ENCODE measurements at regions of chr7 and their contacts with region 1.

Region 1: DNA sequence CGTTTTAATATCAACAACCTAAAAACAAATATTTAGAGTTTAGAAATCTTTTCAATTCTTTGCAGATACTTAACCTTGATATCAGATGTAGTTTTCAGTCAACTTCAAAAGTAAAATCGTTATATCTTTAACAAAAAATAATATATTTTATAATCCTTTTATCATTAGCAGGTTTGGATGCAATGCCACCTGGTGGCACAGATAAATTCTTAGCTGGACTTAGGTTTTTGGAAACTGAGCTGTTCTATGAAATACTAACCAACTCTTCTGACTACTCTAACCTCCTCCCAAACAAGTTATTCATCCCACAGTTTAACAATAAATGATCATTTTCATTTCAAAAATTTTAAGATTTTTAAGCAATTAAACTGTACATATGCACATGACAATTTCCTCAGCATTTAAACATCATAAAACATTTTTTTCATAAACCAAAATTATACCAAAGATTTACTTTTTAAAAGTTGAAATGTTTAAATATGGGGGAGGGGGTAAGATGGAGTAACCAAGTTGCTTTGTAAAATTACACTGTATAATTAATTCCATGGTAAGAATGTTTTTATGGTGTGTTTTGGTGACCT is 56.9 kb downstream of the HIBADH start:
- DNase-seq: peak; percentile 23
- H3K4me3 ChIP-seq: no peak overlapping the region
- H3K27ac ChIP-seq: no peak overlapping the region
- H3K4me1 ChIP-seq: peaks cover 1% of the 10 kb centered on the region
- H3K27me3 ChIP-seq: no peaks in the 10 kb centered on the region
- CTCF ChIP-seq: peak; percentile 49 to 60

Region 2: GRCh38 chr7:27204851-27205337 is 400.9 kb before region 1 on chr7:
- CTCF ChIA-PET with region 1: interaction called, 24 read pairs
- dilution Hi-C with region 1: no loop called
- in situ Hi-C with region 1: no loop called
- intact Hi-C with region 1: no loop called
- DNase-seq: no peak
- H3K4me3 ChIP-seq: peak overlapping the region in 1 of 3 experiments; percentile 6
- H3K27ac ChIP-seq: no peak overlapping the region
- H3K4me1 ChIP-seq: peaks cover 18% of the 10 kb centered on the region
- H3K27me3 ChIP-seq: peaks cover 56% of the 10 kb centered on the region
- CTCF ChIP-seq: no peak

Region 3: GRCh38 chr7:27784393-27785053 is 178.7 kb after region 1 on chr7:
- CTCF ChIA-PET with region 1: no interaction called
- dilution Hi-C with region 1: no loop called
- in situ Hi-C with region 1: no loop called
- intact Hi-C with region 1: no loop called
- DNase-seq: peak; percentile 51
- H3K4me3 ChIP-seq: no peak overlapping the region
- H3K27ac ChIP-seq: no peak overlapping the region
- H3K4me1 ChIP-seq: peaks cover 6% of the 10 kb centered on the region
- H3K27me3 ChIP-seq: no peaks in the 10 kb centered on the region
- CTCF ChIP-seq: peak; percentile 46 to 58

Region 4: DNA sequence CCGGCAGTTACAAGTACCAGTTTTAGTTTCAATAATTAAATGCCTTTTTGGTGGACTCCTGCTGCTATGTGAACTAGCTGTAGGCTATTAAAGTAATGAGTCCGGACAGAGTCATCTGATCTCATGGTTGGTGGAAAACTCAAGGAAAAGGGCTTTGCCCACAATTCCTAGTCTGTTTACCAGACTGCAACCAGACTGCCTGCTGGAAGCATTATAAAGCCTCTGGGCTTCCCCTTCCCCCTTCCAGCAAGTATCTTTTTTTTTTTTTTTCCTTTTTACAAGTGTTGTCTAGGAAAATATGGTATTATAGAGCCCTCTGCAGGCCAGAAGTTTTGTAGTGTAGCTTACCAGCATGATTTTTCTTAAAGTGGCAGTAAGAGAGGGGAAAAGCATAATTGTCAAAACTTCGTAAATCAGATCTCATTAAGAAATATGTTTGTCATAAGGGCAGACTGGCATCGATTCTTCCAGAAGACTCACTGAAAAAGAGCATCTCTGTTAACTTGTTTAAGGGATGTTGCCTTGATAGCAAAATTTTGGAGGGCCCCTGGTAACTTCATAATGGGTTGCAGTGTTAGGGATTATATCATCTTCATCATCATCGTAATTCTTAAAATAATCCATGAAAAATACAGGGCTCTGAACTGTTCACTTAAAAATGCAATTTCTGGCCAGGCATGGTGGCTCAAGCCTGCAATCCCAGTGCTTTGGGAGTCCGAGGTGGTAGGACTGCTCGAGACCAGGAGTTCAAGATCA is 315.5 kb after region 1 on chr7:
- CTCF ChIA-PET with region 1: no interaction called
- dilution Hi-C with region 1: no loop called
- in situ Hi-C with region 1: no loop called
- intact Hi-C with region 1: loop called (anchors 10 kb)
- DNase-seq: peak; percentile 56
- H3K4me3 ChIP-seq: no peak overlapping the region
- H3K27ac ChIP-seq: no peak overlapping the region
- H3K4me1 ChIP-seq: peaks cover 23% of the 10 kb centered on the region
- H3K27me3 ChIP-seq: no peaks in the 10 kb centered on the region
- CTCF ChIP-seq: peak; percentile 32 to 55

Region 5: GRCh38 chr7:28061824-28062196 is 456.0 kb after region 1 on chr7:
- CTCF ChIA-PET with region 1: interaction called, 42 read pairs
- dilution Hi-C with region 1: no loop called
- in situ Hi-C with region 1: no loop called
- intact Hi-C with region 1: no loop called
- DNase-seq: no peak
- H3K4me3 ChIP-seq: no peak overlapping the region
- H3K27ac ChIP-seq: no peak overlapping the region
- H3K4me1 ChIP-seq: peaks cover 22% of the 10 kb centered on the region
- H3K27me3 ChIP-seq: no peaks in the 10 kb centered on the region
- CTCF ChIP-seq: no peak